Activated B cell treated with CpG ODN at 0.5 μM for 24 hours (primary cell): ENCODE measurements at regions of chr14 and their contacts with region 1.

Region 1: DNA sequence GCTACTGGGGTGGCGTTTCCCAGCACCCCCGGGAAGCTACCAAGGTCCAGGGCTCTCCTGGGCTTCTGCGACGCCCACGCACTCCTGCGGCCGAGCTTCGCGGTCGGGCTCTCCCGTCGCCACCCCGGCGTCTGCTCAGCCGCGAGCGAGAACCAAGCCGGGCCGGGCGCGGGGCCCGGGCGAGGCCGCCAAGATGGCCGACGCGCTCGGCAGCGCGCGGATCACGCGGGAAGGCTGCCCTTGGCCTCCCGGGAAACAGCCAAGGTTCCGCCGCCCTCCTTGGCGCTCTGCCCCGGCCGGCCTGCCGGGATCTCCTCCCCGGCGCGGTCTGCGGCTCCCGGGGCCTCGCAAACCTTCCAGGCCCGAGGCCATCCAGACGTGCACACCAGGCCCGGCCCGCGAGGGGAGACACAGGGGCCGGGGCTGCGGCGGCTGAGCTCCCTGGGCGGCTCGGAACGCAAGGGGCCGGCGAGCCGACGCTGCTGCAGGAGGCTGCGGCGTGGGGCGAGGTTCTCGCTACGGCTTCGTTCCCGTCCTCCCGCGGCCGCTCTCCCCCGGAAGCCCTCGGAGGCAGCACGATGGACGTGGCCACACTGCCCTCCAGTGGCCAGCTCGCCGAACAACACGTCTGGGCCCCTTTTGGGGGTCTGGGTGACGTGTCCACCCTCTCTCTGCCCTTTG is 23.5 kb upstream of the ZFP36L1 start:
- DNase-seq: peak; percentile 96
- ATAC-seq: peak; percentile 74
- H3K4me3 Mint-ChIP-seq: peak overlapping the region; percentile 89
- H3K27ac Mint-ChIP-seq: peak overlapping the region; percentile 93
- H3K4me1 Mint-ChIP-seq: peaks cover 86% of the 10 kb centered on the region
- H3K27me3 Mint-ChIP-seq: no peaks in the 10 kb centered on the region
- CTCF ChIP-seq: peak; percentile 54

Region 2: GRCh38 chr14:68210729-68211299 is 605.6 kb before region 1 on chr14:
- CTCF ChIA-PET with region 1: no interaction called
- POLR2A ChIA-PET with region 1: interaction called, 10 read pairs
- intact Hi-C with region 1: no loop called
- DNase-seq: no peak
- ATAC-seq: peak; percentile 87
- H3K4me3 Mint-ChIP-seq: peak overlapping the region; percentile 64
- H3K27ac Mint-ChIP-seq: peak overlapping the region; percentile 84
- H3K4me1 Mint-ChIP-seq: peaks cover 54% of the 10 kb centered on the region
- H3K27me3 Mint-ChIP-seq: no peaks in the 10 kb centered on the region
- CTCF ChIP-seq: no peak

Region 3: DNA sequence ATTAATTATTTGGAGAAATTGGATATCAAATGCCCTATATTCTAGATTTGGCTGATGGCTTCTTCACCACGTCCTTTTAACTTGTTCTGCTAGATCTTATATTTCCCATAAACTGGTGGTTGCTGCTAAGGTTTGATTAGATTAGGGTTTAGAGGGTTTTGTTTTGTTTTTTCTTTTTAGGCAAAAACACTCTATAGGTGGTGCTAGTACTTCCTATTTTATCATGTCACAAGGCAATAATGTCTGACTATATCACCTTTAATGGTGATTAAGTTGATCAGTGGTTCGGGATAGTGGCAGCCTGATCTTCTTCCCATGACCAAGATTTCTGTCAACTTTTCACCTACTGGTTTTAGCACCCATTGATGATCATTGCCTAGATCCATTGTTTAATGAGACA is 541.7 kb before region 1 on chr14:
- CTCF ChIA-PET with region 1: interaction called, 5 read pairs
- POLR2A ChIA-PET with region 1: interaction called, 186 read pairs
- intact Hi-C with region 1: loop called (anchors 1 kb)
- DNase-seq: no peak
- ATAC-seq: no peak
- H3K4me3 Mint-ChIP-seq: peak overlapping the region; percentile 65
- H3K27ac Mint-ChIP-seq: peak overlapping the region; percentile 99
- H3K4me1 Mint-ChIP-seq: peaks cover 93% of the 10 kb centered on the region
- H3K27me3 Mint-ChIP-seq: no peaks in the 10 kb centered on the region
- CTCF ChIP-seq: no peak

Region 4: DNA sequence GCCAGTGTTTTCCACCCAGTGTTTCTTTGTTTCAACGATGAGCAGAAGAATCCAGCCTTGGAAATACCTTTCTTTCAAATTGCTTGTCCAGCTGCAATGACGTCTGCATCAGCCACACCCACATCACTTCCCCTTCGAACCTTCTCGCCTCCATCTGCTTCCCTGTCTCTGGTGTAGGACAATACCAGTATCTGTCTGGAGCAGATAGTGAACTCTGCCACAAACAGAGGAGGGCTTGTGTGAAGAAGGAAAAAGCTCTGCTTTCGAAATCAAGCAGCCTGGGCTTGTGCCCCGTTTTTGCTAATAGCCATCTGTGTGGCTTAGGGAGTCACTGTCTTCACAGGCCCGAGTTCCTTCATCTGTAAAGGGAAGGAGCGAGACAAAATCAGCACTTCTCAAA is 438.9 kb before region 1 on chr14:
- CTCF ChIA-PET with region 1: interaction called, 4 read pairs
- POLR2A ChIA-PET with region 1: interaction called, 10 read pairs
- intact Hi-C with region 1: no loop called
- DNase-seq: no peak
- ATAC-seq: peak; percentile 43
- H3K4me3 Mint-ChIP-seq: peak overlapping the region; percentile 50
- H3K27ac Mint-ChIP-seq: peak overlapping the region; percentile 83
- H3K4me1 Mint-ChIP-seq: peaks cover 69% of the 10 kb centered on the region
- H3K27me3 Mint-ChIP-seq: no peaks in the 10 kb centered on the region
- CTCF ChIP-seq: no peak

Region 5: GRCh38 chr14:68506021-68506644 is 310.3 kb before region 1 on chr14:
- CTCF ChIA-PET with region 1: interaction called, 7 read pairs
- POLR2A ChIA-PET with region 1: interaction called, 120 read pairs
- intact Hi-C with region 1: loop called (anchors 2 kb)
- DNase-seq: no peak
- ATAC-seq: peak; percentile 10
- H3K4me3 Mint-ChIP-seq: peak overlapping the region; percentile 62
- H3K27ac Mint-ChIP-seq: peak overlapping the region; percentile 98
- H3K4me1 Mint-ChIP-seq: peaks cover 87% of the 10 kb centered on the region
- H3K27me3 Mint-ChIP-seq: no peaks in the 10 kb centered on the region
- CTCF ChIP-seq: no peak

Region 6: DNA sequence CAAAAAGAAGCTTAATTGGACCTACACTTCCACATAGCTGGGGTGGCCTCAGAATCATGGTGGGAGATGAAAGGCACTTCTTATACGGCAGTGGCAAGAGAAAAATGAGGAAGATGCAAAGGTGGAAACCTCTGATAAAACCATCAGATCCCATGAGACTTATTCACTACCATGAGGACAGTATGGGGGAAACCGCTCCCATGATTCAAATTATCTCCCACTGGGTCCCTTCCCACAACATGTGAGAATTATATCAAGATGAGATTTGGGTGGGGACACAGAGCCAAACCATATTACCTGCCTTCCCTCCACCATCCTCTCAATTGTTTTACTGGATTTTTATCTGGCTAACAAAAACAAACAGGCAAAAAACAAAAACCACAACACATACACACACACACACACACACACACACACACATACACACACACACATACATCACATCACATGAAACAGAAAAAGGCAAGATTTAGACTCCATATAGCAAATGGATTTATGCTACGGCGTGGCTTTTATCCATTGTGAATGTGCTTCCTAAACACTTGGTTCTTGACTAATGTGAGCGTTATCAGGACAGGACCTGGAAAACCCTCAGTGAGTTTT is 90.2 kb before region 1 on chr14:
- CTCF ChIA-PET with region 1: no interaction called
- POLR2A ChIA-PET with region 1: no interaction called
- intact Hi-C with region 1: no loop called
- DNase-seq: no peak
- ATAC-seq: no peak
- H3K4me3 Mint-ChIP-seq: no peak overlapping the region
- H3K27ac Mint-ChIP-seq: no peak overlapping the region
- H3K4me1 Mint-ChIP-seq: peaks cover 56% of the 10 kb centered on the region
- H3K27me3 Mint-ChIP-seq: no peaks in the 10 kb centered on the region
- CTCF ChIP-seq: no peak

Region 7: DNA sequence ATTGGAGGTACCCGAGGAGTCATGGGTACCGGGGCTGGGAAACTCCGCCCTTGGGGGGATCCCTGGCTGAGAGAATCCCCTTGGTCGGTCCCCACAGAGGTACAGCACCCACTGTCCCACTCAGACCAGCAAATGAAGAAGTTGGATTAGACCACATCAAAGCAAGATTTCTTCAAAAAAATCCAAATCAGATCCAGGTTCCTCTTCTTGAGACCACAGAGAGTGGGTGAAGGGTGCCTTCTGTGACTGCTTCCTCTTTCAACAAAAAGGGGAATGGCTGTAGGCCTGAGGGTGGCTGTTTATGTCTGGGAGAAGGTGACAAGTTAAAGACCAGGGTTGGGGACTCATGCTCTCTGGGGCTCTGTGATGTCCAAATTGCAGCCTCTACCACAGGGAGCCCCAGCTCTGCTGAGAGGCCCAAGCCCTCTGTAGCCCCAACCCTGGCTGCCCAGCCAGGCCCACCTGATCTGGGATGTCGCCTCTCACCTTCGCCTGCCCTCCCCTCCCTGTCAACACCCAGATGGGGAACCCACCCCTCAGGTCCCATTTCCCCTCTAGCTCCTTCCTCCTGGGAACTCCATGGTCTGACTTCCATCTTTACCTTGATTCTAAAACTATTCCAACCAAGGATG is 74.4 kb before region 1 on chr14:
- CTCF ChIA-PET with region 1: no interaction called
- POLR2A ChIA-PET with region 1: interaction called, 4 read pairs
- intact Hi-C with region 1: loop called (anchors 2 kb)
- DNase-seq: peak; percentile 65
- ATAC-seq: peak; percentile 89
- H3K4me3 Mint-ChIP-seq: peak overlapping the region; percentile 32
- H3K27ac Mint-ChIP-seq: peak overlapping the region; percentile 86
- H3K4me1 Mint-ChIP-seq: peaks cover 54% of the 10 kb centered on the region
- H3K27me3 Mint-ChIP-seq: no peaks in the 10 kb centered on the region
- CTCF ChIP-seq: no peak